Activated B cell treated with CpG ODN at 0.5 μM for 24 hours (primary cell): ENCODE measurements at regions of chr1 and their contacts with region 1.

Region 1: GRCh38 chr1:226121587-226122400 is 59.3 kb downstream of the H3-3A start:
- DNase-seq: peak; percentile 88
- ATAC-seq: peak; percentile 66
- H3K4me3 Mint-ChIP-seq: peak overlapping the region; percentile 92
- H3K27ac Mint-ChIP-seq: peak overlapping the region; percentile 100
- H3K4me1 Mint-ChIP-seq: peaks cover 79% of the 10 kb centered on the region
- H3K27me3 Mint-ChIP-seq: no peaks in the 10 kb centered on the region
- CTCF ChIP-seq: no peak

Region 2: DNA sequence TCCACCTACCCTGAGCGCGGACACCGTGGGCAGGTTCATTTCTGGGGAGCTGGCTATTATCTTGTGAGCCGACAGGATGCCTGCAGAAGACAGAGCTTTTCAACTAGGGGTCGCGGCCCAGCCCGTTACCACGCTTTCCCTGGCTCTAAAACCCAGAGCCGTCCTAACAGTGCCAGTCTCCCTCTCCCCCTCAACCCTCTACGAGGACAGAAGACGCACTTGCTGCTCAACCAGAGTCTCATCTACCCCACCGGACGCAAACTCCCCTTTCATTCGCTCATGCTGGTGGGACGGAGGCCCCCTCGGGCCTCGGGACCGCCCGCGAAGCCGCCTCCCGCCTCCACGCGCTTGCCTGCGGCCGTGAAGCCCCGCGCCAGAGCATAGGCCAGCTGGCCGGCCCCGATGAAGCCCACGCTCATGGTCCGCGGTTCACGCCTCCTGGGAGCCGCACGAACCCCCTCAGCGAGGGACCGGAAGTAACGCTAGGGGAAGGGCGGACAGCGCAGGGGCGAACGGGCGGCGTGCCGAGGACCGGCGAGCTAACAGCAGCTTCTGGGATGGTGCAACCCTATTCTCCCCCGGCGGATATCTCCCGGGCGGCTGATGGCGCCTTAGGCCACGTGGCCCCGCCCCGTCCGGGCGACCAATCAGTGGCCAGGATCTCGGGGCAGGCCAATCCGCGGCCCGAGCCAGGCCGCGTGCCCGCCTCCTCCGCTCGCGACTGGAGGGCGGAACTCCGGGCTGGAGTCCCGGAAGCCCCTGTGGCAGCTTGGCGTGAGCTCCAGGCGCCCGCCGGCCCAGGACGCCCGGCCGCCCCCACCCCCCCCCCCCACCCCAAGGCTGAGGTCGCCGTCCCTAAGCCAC is 197.9 kb before region 1 on chr1 and contains the start of gene PYCR2:
- CTCF ChIA-PET with region 1: no interaction called
- POLR2A ChIA-PET with region 1: interaction called, 7 read pairs
- intact Hi-C with region 1: loop called (anchors 1 kb)
- DNase-seq: peak; percentile 93
- ATAC-seq: peak; percentile 98
- H3K4me3 Mint-ChIP-seq: peak within 1 kb of the TSS; percentile 95
- H3K27ac Mint-ChIP-seq: peak within 1 kb of the TSS; percentile 88
- H3K4me1 Mint-ChIP-seq: peaks cover 20% of the 10 kb centered on the region
- H3K27me3 Mint-ChIP-seq: no peaks in the 10 kb centered on the region
- CTCF ChIP-seq: no peak
- total RNA-seq, gene PYCR2: 109 and 110 TPM in 2 replicates

Region 3: GRCh38 chr1:226047495-226047894 is 74.3 kb before region 1 on chr1:
- CTCF ChIA-PET with region 1: no interaction called
- POLR2A ChIA-PET with region 1: no interaction called
- intact Hi-C with region 1: no loop called
- DNase-seq: no peak
- ATAC-seq: no peak
- H3K4me3 Mint-ChIP-seq: no peak overlapping the region
- H3K27ac Mint-ChIP-seq: no peak overlapping the region
- H3K4me1 Mint-ChIP-seq: peaks cover 2% of the 10 kb centered on the region
- H3K27me3 Mint-ChIP-seq: no peaks in the 10 kb centered on the region
- CTCF ChIP-seq: no peak

Region 4: GRCh38 chr1:226062558-226063223 is 59.1 kb before region 1 on chr1 and contains the start of gene H3-3A:
- CTCF ChIA-PET with region 1: interaction called, 66 read pairs
- POLR2A ChIA-PET with region 1: interaction called, 72 read pairs
- intact Hi-C with region 1: loop called (anchors 1 kb)
- DNase-seq: peak; percentile 96
- ATAC-seq: peak; percentile 79
- H3K4me3 Mint-ChIP-seq: peak within 1 kb of the TSS; percentile 100
- H3K27ac Mint-ChIP-seq: peak within 1 kb of the TSS; percentile 99
- H3K4me1 Mint-ChIP-seq: peaks cover 44% of the 10 kb centered on the region
- H3K27me3 Mint-ChIP-seq: no peaks in the 10 kb centered on the region
- CTCF ChIP-seq: no peak
- total RNA-seq, gene H3-3A: 600 and 642 TPM in 2 replicates

Region 5: DNA sequence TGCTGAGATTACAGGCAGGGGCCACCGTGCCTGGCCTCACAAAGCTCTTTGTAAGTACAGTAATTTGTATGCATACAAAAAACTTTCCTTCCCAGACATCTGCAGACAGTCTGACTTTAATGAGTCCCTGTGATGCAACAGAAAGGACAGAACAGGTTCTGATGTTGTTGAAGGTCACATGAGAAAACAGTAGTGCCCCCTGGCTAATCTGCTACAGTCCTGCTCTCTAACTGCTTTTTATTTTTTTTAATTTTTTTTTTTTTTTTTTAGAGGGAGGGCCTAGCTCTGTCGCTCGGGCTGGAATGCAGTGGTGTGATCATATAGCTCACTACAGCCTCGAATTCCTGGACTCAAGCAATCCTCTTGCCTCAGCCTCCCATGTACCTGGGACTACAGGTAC is 28.0 kb after region 1 on chr1:
- CTCF ChIA-PET with region 1: interaction called, 23 read pairs
- POLR2A ChIA-PET with region 1: no interaction called
- intact Hi-C with region 1: no loop called
- DNase-seq: no peak
- ATAC-seq: peak; percentile 49
- H3K4me3 Mint-ChIP-seq: no peak overlapping the region
- H3K27ac Mint-ChIP-seq: peak overlapping the region; percentile 30
- H3K4me1 Mint-ChIP-seq: peaks cover 44% of the 10 kb centered on the region
- H3K27me3 Mint-ChIP-seq: no peaks in the 10 kb centered on the region
- CTCF ChIP-seq: no peak

Region 6: GRCh38 chr1:226195144-226195543 is 73.3 kb after region 1 on chr1:
- CTCF ChIA-PET with region 1: interaction called, 209 read pairs
- POLR2A ChIA-PET with region 1: interaction called, 26 read pairs
- intact Hi-C with region 1: loop called (anchors 1 kb)
- DNase-seq: no peak
- ATAC-seq: no peak
- H3K4me3 Mint-ChIP-seq: no peak overlapping the region
- H3K27ac Mint-ChIP-seq: no peak overlapping the region
- H3K4me1 Mint-ChIP-seq: peaks cover 11% of the 10 kb centered on the region
- H3K27me3 Mint-ChIP-seq: no peaks in the 10 kb centered on the region
- CTCF ChIP-seq: no peak

Region 7: DNA sequence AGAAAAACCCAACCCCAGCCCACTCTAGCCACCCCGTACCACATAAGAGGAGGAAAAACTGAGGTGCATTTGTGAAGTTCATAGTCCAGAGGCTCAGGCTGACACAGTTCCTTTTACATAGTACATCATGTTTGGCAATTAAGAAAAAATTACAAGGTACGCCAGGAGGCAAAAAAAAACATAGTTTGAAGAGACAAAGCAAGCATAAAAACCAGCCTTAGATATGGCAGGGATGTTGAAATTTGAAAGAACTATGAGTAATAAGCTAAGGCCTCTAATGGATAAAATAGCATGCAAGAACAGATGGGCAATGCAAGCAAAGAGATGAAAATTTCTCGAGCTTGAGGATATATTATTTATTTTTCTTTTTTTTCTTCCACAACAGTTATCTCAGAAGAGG is 133.6 kb after region 1 on chr1:
- CTCF ChIA-PET with region 1: no interaction called
- POLR2A ChIA-PET with region 1: no interaction called
- intact Hi-C with region 1: no loop called
- DNase-seq: no peak
- ATAC-seq: no peak
- H3K4me3 Mint-ChIP-seq: no peak overlapping the region
- H3K27ac Mint-ChIP-seq: no peak overlapping the region
- H3K4me1 Mint-ChIP-seq: peaks cover 4% of the 10 kb centered on the region
- H3K27me3 Mint-ChIP-seq: no peaks in the 10 kb centered on the region
- CTCF ChIP-seq: no peak

Region 8: GRCh38 chr1:226370144-226370923 is 248.5 kb after region 1 on chr1:
- CTCF ChIA-PET with region 1: interaction called, 7 read pairs
- POLR2A ChIA-PET with region 1: no interaction called
- intact Hi-C with region 1: loop called (anchors 2 kb)
- DNase-seq: no peak
- ATAC-seq: peak; percentile 74
- H3K4me3 Mint-ChIP-seq: peak overlapping the region; percentile 68
- H3K27ac Mint-ChIP-seq: peak overlapping the region; percentile 91
- H3K4me1 Mint-ChIP-seq: peaks cover 48% of the 10 kb centered on the region
- H3K27me3 Mint-ChIP-seq: no peaks in the 10 kb centered on the region
- CTCF ChIP-seq: no peak